Psoas muscle (tissue), 8 donors: ENCODE measurements at regions of chr4 and their contacts with region 1.

Region 1: GRCh38 chr4:140095694-140096482 is 58.1 kb downstream of the MAML3 start:
- DNase-seq: peak in 1 of 2 donors; percentile 26
- ATAC-seq: peak in 3 of 4 donors; percentile 25 to 64 (median 45)
- H3K4me3 ChIP-seq: peak overlapping the region; percentile 19
- H3K27ac ChIP-seq: peak overlapping the region; percentile 84
- H3K4me1 ChIP-seq: peaks cover 58% of the 10 kb centered on the region
- H3K27me3 ChIP-seq: no peaks in the 10 kb centered on the region
- CTCF ChIP-seq: no peak

Region 2: GRCh38 chr4:140037357-140038030 is 58.4 kb before region 1 on chr4:
- intact Hi-C with region 1: no loop called
- DNase-seq: no peak
- ATAC-seq: peak in 2 of 4 donors; percentile 58 to 76
- H3K4me3 ChIP-seq: no peak overlapping the region
- H3K27ac ChIP-seq: no peak overlapping the region
- H3K4me1 ChIP-seq: peaks cover 11% of the 10 kb centered on the region
- H3K27me3 ChIP-seq: no peaks in the 10 kb centered on the region
- CTCF ChIP-seq: no peak

Region 3: DNA sequence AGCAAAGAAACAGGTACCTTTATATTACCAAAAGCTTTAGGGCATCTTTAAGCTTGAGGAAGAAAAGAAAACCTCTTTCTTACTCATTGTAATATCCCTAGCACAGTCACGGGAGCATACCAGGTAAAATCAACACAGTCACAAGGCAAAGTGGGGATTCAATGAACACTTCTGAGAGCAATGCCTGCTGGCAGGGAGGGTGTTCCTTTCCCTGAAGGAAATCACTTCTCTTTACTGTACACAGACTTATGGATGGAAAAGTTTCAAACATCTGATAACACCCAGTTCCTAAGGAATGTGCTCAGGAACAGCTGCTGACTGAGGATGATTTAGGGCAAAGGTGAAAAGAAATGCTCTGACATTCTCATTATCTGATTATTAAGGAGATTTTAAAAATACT is 36.7 kb before region 1 on chr4:
- intact Hi-C with region 1: loop called in 1 of 2 experiments (anchors 5 kb)
- DNase-seq: no peak
- ATAC-seq: no peak
- H3K4me3 ChIP-seq: no peak overlapping the region
- H3K27ac ChIP-seq: no peak overlapping the region
- H3K4me1 ChIP-seq: peaks cover 13% of the 10 kb centered on the region
- H3K27me3 ChIP-seq: no peaks in the 10 kb centered on the region
- CTCF ChIP-seq: no peak